ENCODE measurements at regions of chr20 and their contacts with region 1.

Region 1: GRCh38 chr20:41173161-41173721 is 35.9 kb downstream of the PLCG1 start:
- DNase-seq: peak; percentile 86
- ATAC-seq: peak; percentile 94
- H3K4me3 Mint-ChIP-seq: no peak overlapping the region
- H3K27ac Mint-ChIP-seq: no peak overlapping the region
- H3K4me1 Mint-ChIP-seq: peaks cover 3% of the 10 kb centered on the region
- H3K27me3 Mint-ChIP-seq: no peaks in the 10 kb centered on the region
- CTCF ChIP-seq: peak; percentile 95

Region 2: GRCh38 chr20:40997116-40997515 is 176.1 kb before region 1 on chr20:
- CTCF ChIA-PET with region 1: no interaction called
- POLR2A ChIA-PET with region 1: no interaction called
- DNase-seq: peak; percentile 57
- ATAC-seq: peak; percentile 82
- H3K4me3 Mint-ChIP-seq: no peak overlapping the region
- H3K27ac Mint-ChIP-seq: peak overlapping the region; percentile 64
- H3K4me1 Mint-ChIP-seq: peaks cover 15% of the 10 kb centered on the region
- H3K27me3 Mint-ChIP-seq: no peaks in the 10 kb centered on the region
- CTCF ChIP-seq: no peak

Region 3: DNA sequence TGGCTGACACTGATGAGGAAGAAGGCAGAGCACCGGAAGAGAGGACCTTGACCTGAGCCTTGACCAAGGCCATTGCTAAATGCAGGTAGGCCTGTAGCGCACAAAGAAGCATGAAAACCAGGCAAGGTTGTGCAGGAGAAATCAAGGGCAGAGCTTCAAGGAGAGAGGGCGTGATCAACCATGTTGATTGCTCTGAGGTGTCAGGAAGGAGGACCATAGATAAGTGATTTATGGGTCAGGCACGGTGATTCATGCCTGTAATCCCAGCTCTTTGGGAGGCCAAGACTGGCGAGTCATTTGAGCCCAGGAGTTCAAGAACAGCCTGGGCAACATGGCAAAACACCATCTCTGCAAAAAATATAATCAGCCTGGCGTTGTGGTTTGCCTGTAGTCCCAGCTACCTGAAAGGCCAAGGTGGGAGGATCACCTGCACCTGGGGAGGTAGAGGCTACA is 23.5 kb before region 1 on chr20:
- CTCF ChIA-PET with region 1: interaction called, 20 read pairs
- POLR2A ChIA-PET with region 1: no interaction called
- DNase-seq: no peak
- ATAC-seq: no peak
- H3K4me3 Mint-ChIP-seq: no peak overlapping the region
- H3K27ac Mint-ChIP-seq: no peak overlapping the region
- H3K4me1 Mint-ChIP-seq: peaks cover 51% of the 10 kb centered on the region
- H3K27me3 Mint-ChIP-seq: no peaks in the 10 kb centered on the region
- CTCF ChIP-seq: no peak

Region 4: GRCh38 chr20:41185013-41185757 is 11.9 kb after region 1 on chr20:
- CTCF ChIA-PET with region 1: interaction called, 11 read pairs
- POLR2A ChIA-PET with region 1: no interaction called
- DNase-seq: no peak
- ATAC-seq: no peak
- H3K4me3 Mint-ChIP-seq: no peak overlapping the region
- H3K27ac Mint-ChIP-seq: no peak overlapping the region
- H3K4me1 Mint-ChIP-seq: no peaks in the 10 kb centered on the region
- H3K27me3 Mint-ChIP-seq: no peaks in the 10 kb centered on the region
- CTCF ChIP-seq: no peak

Region 5: GRCh38 chr20:41200446-41201202 is 27.4 kb after region 1 on chr20:
- CTCF ChIA-PET with region 1: interaction called, 10 read pairs
- POLR2A ChIA-PET with region 1: no interaction called
- DNase-seq: no peak
- ATAC-seq: peak; percentile 41; the same call in 1 of the 2 replicates
- H3K4me3 Mint-ChIP-seq: no peak overlapping the region
- H3K27ac Mint-ChIP-seq: no peak overlapping the region
- H3K4me1 Mint-ChIP-seq: peaks cover 6% of the 10 kb centered on the region; the same call in 1 of the 2 replicates
- H3K27me3 Mint-ChIP-seq: no peaks in the 10 kb centered on the region
- CTCF ChIP-seq: no peak

Region 6: DNA sequence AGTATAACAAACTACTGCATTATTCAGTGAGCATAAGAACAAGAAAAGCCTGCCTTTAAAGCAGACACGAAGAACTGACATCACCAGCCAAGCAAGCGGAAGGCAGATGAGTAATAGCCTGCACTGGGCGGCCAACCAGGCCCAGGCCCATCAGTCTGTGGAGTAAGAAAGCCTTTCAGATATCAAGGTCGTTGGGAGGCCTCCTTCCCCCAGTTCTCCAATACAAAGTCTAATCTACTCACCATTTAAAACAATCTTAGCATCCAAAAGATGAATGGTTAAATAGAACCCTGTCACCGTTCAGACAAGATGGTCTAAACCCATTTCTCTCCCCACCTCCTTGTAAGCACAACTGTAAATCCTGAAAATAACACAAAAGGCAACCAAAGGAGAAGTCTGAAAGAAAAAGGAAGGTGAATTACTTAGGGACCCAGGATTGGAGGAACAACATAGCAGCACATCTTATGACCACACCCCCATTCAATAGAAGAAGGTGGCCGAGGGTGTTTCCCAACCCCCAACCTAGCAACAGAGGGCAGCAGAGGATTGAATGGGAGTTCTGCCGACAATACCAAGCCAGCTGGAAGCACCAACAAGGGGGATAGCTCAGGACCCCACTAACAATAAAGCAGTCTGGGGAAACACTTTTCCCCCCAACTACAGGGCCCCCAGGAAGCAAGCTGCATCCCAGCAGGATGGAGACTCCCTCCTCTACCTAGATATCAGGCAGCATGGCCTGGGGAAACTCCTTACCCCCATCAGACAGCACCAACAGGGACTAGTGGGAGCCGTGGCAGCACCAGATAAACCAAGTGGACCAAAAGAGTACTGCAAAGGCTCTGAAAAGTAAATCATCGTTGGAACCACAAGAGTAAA is 76.4 kb after region 1 on chr20:
- CTCF ChIA-PET with region 1: interaction called, 18 read pairs
- POLR2A ChIA-PET with region 1: no interaction called
- DNase-seq: peak; percentile 71
- ATAC-seq: peak; percentile 90
- H3K4me3 Mint-ChIP-seq: no peak overlapping the region; the same call in 1 of the 2 replicates
- H3K27ac Mint-ChIP-seq: peak overlapping the region; percentile 80; the same call in 1 of the 2 replicates
- H3K4me1 Mint-ChIP-seq: peaks cover 5% of the 10 kb centered on the region; the same call in 1 of the 2 replicates
- H3K27me3 Mint-ChIP-seq: peaks cover 37% of the 10 kb centered on the region
- CTCF ChIP-seq: peak; percentile 41; the same call in 1 of the 2 replicates

Region 7: GRCh38 chr20:41352108-41352507 is 178.9 kb after region 1 on chr20:
- CTCF ChIA-PET with region 1: interaction called, 11 read pairs
- POLR2A ChIA-PET with region 1: no interaction called
- DNase-seq: no peak
- ATAC-seq: peak; percentile 82
- H3K4me3 Mint-ChIP-seq: no peak overlapping the region
- H3K27ac Mint-ChIP-seq: no peak overlapping the region
- H3K4me1 Mint-ChIP-seq: peaks cover 1% of the 10 kb centered on the region
- H3K27me3 Mint-ChIP-seq: no peaks in the 10 kb centered on the region
- CTCF ChIP-seq: no peak

Measured in WTC11 (cell line).